ENCODE measurements at regions of chr3 and their contacts with region 1.

Region 1: DNA sequence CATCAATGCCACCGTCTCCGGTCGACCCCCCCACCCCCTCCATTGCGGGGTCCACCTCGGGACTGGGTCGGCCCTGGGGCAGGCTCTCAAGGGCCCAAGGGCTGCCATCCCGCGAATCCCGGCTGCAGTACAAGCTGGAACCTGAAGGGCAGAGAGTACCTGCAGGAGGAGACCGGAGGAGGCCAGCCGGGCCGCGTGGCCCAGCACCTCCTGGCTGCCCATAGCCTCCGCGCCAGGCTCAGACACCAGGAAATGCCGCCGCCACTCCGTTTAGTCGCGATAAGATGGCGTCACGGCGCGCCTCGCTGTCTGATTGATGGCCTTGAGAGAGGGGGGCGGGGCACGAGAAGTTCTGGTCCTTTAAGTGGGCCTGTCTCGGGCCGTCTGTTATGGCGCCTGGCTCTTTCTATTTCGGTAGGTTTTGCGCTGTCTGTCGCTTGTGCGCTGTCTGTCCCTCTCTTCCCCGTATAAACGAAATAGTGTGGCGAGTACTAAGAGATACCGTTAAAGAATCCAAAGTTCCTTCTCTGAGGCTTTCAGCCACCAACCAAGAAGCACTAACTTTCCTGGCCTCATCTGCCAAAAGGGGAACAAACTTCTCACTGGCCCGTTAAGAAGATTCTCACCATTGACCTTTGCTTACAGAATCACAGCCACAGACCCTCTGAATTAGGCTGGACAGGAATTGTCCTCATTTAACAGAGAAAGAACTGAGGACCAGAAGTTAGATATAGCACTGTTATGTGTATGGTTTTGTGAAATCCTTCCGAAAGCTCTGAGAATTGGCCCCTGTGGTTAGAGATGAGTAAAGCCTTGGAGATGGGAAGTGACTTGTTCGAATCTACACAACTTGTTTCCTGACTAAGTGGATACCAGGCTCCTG is at the start of gene RFT1:
- DNase-seq: peak; percentile 98
- total RNA-seq, gene RFT1: 8.6 TPM

Region 2: GRCh38 chr3:53160660-53161449 is 30.4 kb after region 1 on chr3 and contains the start of gene PRKCD:
- intact Hi-C with region 1: loop called (anchors 2 kb)
- DNase-seq: peak; percentile 92
- total RNA-seq, gene PRKCD: 10.6 TPM

Region 3: DNA sequence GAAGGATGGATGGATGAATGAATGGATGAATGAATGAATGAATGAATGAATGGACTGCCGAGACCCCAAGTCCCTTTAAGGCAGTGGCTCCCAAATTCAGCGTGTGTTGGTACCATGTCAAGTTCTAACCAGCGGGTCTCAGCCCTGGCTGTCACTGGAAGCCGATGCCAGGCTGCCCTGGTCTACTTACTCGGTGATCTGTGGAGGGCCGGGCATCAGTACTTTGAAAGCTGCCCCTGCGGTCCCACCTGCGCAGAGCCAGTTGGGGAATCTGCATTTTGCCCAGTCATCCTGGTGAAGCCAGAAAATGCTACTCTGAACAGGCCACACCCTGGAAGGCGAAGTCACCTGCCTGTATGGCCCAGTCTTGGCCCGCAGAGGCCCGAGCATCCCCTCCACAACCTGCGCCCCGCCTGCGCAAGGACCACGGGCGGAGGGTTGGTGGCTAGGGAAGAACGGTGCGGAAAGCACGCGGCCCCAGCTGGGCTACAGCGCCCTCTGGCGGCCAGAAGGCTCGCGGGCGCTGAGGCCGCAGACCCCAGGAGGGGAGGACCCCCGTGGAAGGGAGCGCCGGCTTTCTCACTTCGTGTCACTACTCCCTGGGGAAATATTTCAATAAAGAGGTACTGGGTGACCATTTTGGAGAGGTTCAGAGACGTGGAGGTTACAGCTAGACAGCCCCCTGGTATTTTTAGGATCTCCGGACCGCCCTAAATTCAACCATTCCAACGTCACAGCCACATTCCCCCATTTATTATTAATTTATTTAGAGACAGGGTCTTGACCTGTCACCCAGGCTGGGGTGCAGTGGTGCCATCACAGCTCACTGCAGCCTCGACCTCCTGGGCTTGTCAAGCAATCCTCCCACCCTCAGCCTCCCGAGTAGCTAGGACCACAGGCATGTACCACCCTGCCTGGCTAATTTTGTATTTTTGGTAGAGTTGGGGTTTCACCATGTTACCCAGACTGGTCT is 65.5 kb after region 1 on chr3:
- intact Hi-C with region 1: loop called (anchors 2 kb)
- DNase-seq: peak; percentile 81

Measured in cardiac septum (tissue), 1 donor.